B cell (primary cell): ENCODE measurements at regions of chr11 and their contacts with region 1.

Region 1: DNA sequence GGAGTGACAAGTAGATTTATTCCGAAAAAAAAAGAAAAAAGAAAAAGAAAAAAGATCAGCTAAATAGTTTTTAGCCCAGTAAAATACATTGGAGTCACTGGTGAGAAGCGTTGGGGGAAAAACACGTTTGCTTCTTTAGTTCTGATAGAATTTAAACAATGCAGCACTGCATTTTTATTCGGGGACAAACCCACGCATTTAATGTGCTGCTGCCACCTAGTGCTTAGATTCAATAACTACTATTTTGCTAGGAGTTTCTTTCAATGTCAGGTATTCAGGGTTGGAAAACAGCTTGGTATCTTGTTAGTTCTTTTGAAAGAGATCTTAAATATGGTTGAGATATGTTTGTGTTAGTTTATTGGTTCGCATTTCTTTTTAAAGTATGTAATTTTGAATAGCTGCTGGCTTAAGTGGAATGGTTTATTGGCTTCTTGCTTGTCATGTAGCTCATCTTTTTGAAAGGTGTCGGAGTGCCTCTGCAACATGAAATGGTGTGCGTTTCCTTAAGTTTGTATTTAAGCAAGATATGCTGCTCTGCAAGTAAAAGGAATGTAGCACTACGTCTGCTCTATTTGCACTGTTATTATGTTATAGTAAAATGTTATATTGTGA is 41.9 kb downstream of the SVIP start:
- DNase-seq: peak; percentile 51
- ATAC-seq: peak; percentile 62
- H3K4me3 ChIP-seq: no peak overlapping the region
- H3K4me3 Mint-ChIP-seq: no peak overlapping the region
- H3K27ac ChIP-seq: no peak overlapping the region
- H3K27ac Mint-ChIP-seq: no peak overlapping the region
- H3K4me1 ChIP-seq: no peaks in the 10 kb centered on the region
- H3K4me1 Mint-ChIP-seq: no peaks in the 10 kb centered on the region
- H3K27me3 ChIP-seq: no peaks in the 10 kb centered on the region
- H3K27me3 Mint-ChIP-seq: peaks cover 8% of the 10 kb centered on the region
- CTCF ChIP-seq: peak; percentile 90

Region 2: GRCh38 chr11:22244986-22245592 is 542.6 kb before region 1 on chr11:
- CTCF ChIA-PET with region 1: interaction called, 12 read pairs
- POLR2A ChIA-PET with region 1: no interaction called
- intact Hi-C with region 1: no loop called
- DNase-seq: peak; percentile 21
- ATAC-seq: peak; percentile 41
- H3K4me3 ChIP-seq: no peak overlapping the region
- H3K4me3 Mint-ChIP-seq: no peak overlapping the region
- H3K27ac ChIP-seq: no peak overlapping the region
- H3K27ac Mint-ChIP-seq: no peak overlapping the region
- H3K4me1 ChIP-seq: no peaks in the 10 kb centered on the region
- H3K4me1 Mint-ChIP-seq: no peaks in the 10 kb centered on the region
- H3K27me3 ChIP-seq: no peaks in the 10 kb centered on the region
- H3K27me3 Mint-ChIP-seq: peaks cover 11% of the 10 kb centered on the region
- CTCF ChIP-seq: peak; percentile 72

Region 3: GRCh38 chr11:22331771-22332170 is 455.9 kb before region 1 on chr11:
- CTCF ChIA-PET with region 1: interaction called, 43 read pairs
- POLR2A ChIA-PET with region 1: no interaction called
- intact Hi-C with region 1: loop called (anchors 1 kb)
- DNase-seq: no peak
- ATAC-seq: no peak
- H3K4me3 ChIP-seq: no peak overlapping the region
- H3K4me3 Mint-ChIP-seq: no peak overlapping the region
- H3K27ac ChIP-seq: no peak overlapping the region
- H3K27ac Mint-ChIP-seq: no peak overlapping the region
- H3K4me1 ChIP-seq: no peaks in the 10 kb centered on the region
- H3K4me1 Mint-ChIP-seq: no peaks in the 10 kb centered on the region
- H3K27me3 ChIP-seq: peaks cover 0 to 3% (median 0%) of the 10 kb centered on the region in 4 experiments
- H3K27me3 Mint-ChIP-seq: peaks cover 7% of the 10 kb centered on the region
- CTCF ChIP-seq: no peak

Region 4: GRCh38 chr11:22337596-22338485 is 449.8 kb before region 1 on chr11 and contains the start of gene SLC17A6:
- CTCF ChIA-PET with region 1: interaction called, 43 read pairs
- POLR2A ChIA-PET with region 1: no interaction called
- intact Hi-C with region 1: loop called (anchors 1 kb)
- DNase-seq: no peak
- ATAC-seq: no peak
- H3K4me3 ChIP-seq: no peak within 1 kb of the TSS
- H3K4me3 Mint-ChIP-seq: no peak within 1 kb of the TSS
- H3K27ac ChIP-seq: no peak within 1 kb of the TSS
- H3K27ac Mint-ChIP-seq: no peak within 1 kb of the TSS
- H3K4me1 ChIP-seq: peaks cover 0 to 8% of the 10 kb centered on the region in 2 donors
- H3K4me1 Mint-ChIP-seq: peaks cover 5% of the 10 kb centered on the region
- H3K27me3 ChIP-seq: peaks cover 0 to 42% (median 38%) of the 10 kb centered on the region in 4 experiments
- H3K27me3 Mint-ChIP-seq: peaks cover 47% of the 10 kb centered on the region
- CTCF ChIP-seq: no peak
- total RNA-seq, gene SLC17A6: not detected in 2 replicates